ENCODE measurements at regions of chr7 and their contacts with region 1.

Region 1: GRCh38 chr7:137169282-137169698 is 174.2 kb downstream of the PTN start:
- DNase-seq: peak; percentile 68
- ATAC-seq: peak; percentile 75
- H3K4me3 ChIP-seq: no peak overlapping the region
- H3K27ac ChIP-seq: no peak overlapping the region
- H3K4me1 ChIP-seq: no peaks in the 10 kb centered on the region
- H3K27me3 ChIP-seq: no peaks in the 10 kb centered on the region
- CTCF ChIP-seq: peak; percentile 71

Region 2: GRCh38 chr7:137001041-137001440 is 168.2 kb before region 1 on chr7:
- CTCF ChIA-PET with region 1: no interaction called
- POLR2A ChIA-PET with region 1: no interaction called
- intact Hi-C with region 1: loop called (anchors 1 kb)
- DNase-seq: no peak
- ATAC-seq: peak; percentile 2; the same call in 1 of the 2 replicates
- H3K4me3 ChIP-seq: no peak overlapping the region
- H3K27ac ChIP-seq: no peak overlapping the region
- H3K4me1 ChIP-seq: peaks cover 46% of the 10 kb centered on the region
- H3K27me3 ChIP-seq: no peaks in the 10 kb centered on the region
- CTCF ChIP-seq: no peak

Region 3: DNA sequence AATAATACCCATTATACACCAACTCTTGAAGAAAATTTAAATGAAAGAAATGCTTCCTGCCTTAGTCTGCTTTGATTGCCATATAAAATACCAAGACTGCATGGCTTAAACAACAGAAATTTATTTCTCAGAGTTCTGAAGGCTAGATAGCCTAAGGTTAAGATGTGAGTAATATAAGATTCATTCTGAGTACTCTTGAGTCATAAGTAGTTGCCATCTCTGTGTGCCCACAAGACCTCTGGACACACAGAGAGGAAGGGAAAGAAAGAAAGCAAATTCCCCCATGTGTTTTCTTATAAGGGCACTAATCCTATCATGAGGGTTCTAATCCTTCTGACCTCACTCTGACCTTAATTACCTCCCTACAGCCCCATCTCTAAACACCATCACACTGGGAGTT is 26.9 kb before region 1 on chr7:
- CTCF ChIA-PET with region 1: no interaction called
- POLR2A ChIA-PET with region 1: no interaction called
- intact Hi-C with region 1: loop called (anchors 1 kb)
- DNase-seq: peak; percentile 90
- ATAC-seq: peak; percentile 95
- H3K4me3 ChIP-seq: no peak overlapping the region
- H3K27ac ChIP-seq: peak overlapping the region; percentile 90
- H3K4me1 ChIP-seq: peaks cover 36% of the 10 kb centered on the region
- H3K27me3 ChIP-seq: no peaks in the 10 kb centered on the region
- CTCF ChIP-seq: no peak

Region 4: DNA sequence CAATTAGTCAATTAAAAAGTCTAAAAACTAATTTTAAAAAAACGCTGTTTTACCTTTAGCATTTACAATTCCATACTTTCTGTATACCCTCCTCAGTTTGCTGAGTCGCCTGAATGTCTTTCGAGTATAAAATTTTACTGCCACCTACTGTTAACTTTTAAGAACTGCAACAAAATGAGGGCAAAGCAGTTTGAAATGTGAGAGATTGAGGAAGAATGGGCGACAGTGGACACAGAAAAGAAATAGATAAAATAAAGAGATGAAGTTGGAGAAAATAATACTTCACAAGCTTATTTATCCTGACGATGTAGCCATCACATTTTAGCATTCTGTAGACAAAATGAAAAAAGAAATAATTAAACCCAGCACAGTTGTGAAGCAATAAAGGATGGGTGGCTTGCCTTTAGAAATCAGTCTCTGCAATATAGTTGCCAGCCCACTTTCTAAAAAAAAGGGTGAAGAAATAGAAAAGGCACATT is 285.0 kb after region 1 on chr7:
- CTCF ChIA-PET with region 1: interaction called, 5 read pairs
- POLR2A ChIA-PET with region 1: no interaction called
- intact Hi-C with region 1: loop called (anchors 1 kb)
- DNase-seq: peak; percentile 69
- ATAC-seq: peak; percentile 56
- H3K4me3 ChIP-seq: no peak overlapping the region
- H3K27ac ChIP-seq: no peak overlapping the region
- H3K4me1 ChIP-seq: peaks cover 6% of the 10 kb centered on the region; the same call in 1 of the 2 replicates
- H3K27me3 ChIP-seq: peaks cover 30% of the 10 kb centered on the region
- CTCF ChIP-seq: peak; percentile 75